GM10248 (cell line): ENCODE measurements at regions of chr1 and their contacts with region 1.

Region 1: GRCh38 chr1:228452194-228453021 is 34.8 kb upstream of the RNF187 start:
- DNase-seq: no peak
- CTCF ChIP-seq: no peak

Region 2: GRCh38 chr1:228407118-228408042 is 45.0 kb before region 1 on chr1:
- CTCF ChIA-PET with region 1: no interaction called
- POLR2A ChIA-PET with region 1: interaction called, 13 read pairs
- DNase-seq: no peak
- CTCF ChIP-seq: no peak

Region 3: DNA sequence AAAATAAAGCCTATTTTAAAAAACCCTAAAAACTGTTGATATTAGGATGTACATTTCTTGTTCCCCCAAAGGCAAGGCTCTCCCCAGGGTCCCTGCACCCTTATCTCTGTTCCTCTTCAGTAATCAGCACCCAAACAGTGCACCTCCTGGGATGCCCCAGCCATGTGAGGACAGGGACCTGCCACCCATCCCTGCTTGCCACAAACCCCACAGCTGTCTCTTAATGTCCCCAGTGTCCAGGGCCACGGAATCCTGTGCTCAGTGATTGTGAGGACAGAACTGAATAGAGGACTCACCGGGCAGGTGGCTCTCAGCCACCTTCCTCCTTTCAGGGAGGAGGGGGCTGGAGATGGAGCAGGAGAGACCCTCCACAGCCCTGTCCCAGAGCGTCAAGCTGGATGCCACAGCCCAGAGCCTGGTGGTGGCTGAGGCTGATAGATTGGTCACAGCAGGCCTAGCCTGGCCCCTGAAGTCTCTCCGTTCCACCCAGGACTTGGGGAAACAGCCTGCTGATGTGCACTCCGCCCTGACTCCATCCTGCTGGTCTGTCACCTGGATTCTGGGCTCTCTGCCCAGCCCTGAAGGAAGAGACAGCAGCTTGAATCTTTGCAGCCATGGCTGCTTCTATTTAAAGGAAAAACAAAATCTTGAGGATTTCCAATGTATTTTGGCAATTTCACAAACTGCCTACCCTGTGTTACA is 57.8 kb after region 1 on chr1:
- CTCF ChIA-PET with region 1: no interaction called
- POLR2A ChIA-PET with region 1: no interaction called
- DNase-seq: no peak
- CTCF ChIP-seq: no peak